ENCODE measurements at regions of chr3 and their contacts with region 1.

Region 1: DNA sequence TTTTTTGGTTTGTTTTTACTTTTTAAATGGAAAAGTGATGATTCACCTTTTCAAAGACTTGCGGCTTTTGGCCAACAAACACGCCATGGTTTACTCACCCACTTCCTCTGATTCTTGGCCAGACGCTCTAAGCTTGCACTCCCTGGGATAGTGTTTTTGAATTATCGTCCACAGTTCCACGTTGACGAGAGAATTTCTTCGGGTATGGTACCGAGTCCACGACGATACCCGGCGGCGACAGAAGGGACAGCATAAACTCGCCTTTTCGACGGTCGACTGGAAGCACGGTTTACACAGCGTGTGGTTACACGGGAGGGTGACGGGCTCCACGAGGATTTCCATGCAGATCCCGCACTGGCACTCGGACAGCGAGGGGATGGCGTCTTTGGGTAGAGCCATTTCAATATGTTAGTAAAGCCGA is 783 bp downstream of the RNF168 start:
- DNase-seq: peak; percentile 60
- H3K4me3 Mint-ChIP-seq: peak overlapping the region; percentile 99
- H3K27ac Mint-ChIP-seq: peak overlapping the region; percentile 100
- H3K4me1 Mint-ChIP-seq: peaks cover 25% of the 10 kb centered on the region
- H3K27me3 Mint-ChIP-seq: no peaks in the 10 kb centered on the region

Region 2: GRCh38 chr3:196274585-196274984 is 228.2 kb before region 1 on chr3:
- intact Hi-C with region 1: loop called (anchors 1 kb)
- DNase-seq: peak; percentile 74
- H3K4me3 Mint-ChIP-seq: peak overlapping the region; percentile 62
- H3K27ac Mint-ChIP-seq: peak overlapping the region; percentile 90
- H3K4me1 Mint-ChIP-seq: peaks cover 47% of the 10 kb centered on the region
- H3K27me3 Mint-ChIP-seq: no peaks in the 10 kb centered on the region

Region 3: GRCh38 chr3:196317687-196318467 is 184.9 kb before region 1 on chr3 and contains the start of gene DYNLT2B:
- intact Hi-C with region 1: loop called (anchors 5 kb)
- DNase-seq: peak; percentile 88
- H3K4me3 Mint-ChIP-seq: peak within 1 kb of the TSS; percentile 94
- H3K27ac Mint-ChIP-seq: peak within 1 kb of the TSS; percentile 97
- H3K4me1 Mint-ChIP-seq: peaks cover 10% of the 10 kb centered on the region
- H3K27me3 Mint-ChIP-seq: no peaks in the 10 kb centered on the region
- total RNA-seq, gene DYNLT2B: 10.9 and 12.3 TPM in 2 replicates

Region 4: DNA sequence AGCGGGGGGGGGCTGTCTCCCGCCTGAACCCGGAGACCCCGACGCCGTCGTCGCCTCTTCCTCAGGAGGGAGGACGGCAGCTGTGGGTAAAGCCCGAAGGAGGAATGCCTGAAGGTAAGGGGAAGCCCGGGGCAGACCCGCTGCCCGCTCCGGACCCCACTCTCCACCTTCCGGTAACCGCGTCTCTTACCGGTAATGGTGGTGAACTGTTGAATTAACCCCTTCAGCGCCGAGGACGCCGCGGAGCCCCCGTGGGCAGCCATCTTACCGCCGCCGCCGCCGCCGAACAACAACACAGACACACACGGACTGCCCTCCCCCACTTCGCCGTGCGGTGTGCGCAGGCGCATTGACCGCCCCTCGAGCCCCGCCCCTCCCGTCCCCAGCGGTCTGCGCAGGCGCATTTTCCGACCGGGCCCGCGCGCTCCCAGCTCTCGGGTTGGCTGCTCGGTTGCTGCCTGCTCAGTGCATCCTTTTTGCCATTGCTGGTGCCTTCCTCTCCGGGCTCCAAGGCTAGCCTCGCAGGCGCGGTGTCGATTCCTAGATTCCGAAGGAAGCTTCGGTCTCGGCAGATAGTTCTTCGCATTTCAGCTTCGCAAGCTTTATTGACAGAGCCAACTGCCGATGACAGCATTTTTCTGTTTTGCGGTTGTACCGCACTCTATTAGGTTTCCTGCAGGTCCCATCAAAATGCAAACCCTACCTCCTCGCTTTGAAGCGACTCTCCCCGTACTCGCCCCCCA is 70.5 kb before region 1 on chr3 and contains the start of gene UBXN7:
- intact Hi-C with region 1: loop called (anchors 2 kb)
- DNase-seq: peak; percentile 93
- H3K4me3 Mint-ChIP-seq: peak within 1 kb of the TSS; percentile 86
- H3K27ac Mint-ChIP-seq: peak within 1 kb of the TSS; percentile 92
- H3K4me1 Mint-ChIP-seq: peaks cover 18% of the 10 kb centered on the region
- H3K27me3 Mint-ChIP-seq: no peaks in the 10 kb centered on the region
- total RNA-seq, gene UBXN7: 64.4 and 67.8 TPM in 2 replicates

Region 5: DNA sequence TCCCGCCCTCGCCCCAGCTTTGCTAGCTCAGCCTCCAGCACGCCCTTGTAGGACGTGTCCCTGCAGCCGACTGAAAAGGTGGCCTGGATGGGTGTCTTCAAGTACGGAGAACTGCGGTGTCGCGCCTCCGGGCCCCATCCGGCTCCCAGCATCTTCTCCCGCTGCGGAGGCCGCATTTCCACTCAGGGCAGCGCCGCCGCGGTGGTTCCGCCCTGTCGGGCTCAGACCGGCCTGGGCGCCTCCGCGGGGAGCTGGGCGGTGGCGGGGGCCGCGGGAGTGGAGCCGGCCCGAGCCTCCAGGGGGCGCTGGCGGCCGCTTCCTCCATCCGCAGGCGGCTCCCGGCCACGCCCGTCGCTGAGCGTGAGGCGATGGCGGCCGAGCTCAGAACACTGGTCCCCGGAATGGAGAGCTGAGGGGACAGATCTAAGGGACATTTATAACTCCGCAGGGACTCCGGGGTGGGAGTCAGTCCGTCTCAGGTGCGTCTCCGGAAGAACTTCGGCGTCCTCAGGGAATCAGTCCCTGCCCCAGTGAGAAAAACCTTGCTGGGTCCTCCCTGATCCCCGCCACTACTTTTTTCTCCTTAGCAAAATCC is 26.0 kb after region 1 on chr3:
- intact Hi-C with region 1: loop called (anchors 1 kb)
- DNase-seq: peak; percentile 78
- H3K4me3 Mint-ChIP-seq: peak overlapping the region; percentile 72
- H3K27ac Mint-ChIP-seq: peak overlapping the region; percentile 88
- H3K4me1 Mint-ChIP-seq: peaks cover 12% of the 10 kb centered on the region
- H3K27me3 Mint-ChIP-seq: no peaks in the 10 kb centered on the region

Region 6: DNA sequence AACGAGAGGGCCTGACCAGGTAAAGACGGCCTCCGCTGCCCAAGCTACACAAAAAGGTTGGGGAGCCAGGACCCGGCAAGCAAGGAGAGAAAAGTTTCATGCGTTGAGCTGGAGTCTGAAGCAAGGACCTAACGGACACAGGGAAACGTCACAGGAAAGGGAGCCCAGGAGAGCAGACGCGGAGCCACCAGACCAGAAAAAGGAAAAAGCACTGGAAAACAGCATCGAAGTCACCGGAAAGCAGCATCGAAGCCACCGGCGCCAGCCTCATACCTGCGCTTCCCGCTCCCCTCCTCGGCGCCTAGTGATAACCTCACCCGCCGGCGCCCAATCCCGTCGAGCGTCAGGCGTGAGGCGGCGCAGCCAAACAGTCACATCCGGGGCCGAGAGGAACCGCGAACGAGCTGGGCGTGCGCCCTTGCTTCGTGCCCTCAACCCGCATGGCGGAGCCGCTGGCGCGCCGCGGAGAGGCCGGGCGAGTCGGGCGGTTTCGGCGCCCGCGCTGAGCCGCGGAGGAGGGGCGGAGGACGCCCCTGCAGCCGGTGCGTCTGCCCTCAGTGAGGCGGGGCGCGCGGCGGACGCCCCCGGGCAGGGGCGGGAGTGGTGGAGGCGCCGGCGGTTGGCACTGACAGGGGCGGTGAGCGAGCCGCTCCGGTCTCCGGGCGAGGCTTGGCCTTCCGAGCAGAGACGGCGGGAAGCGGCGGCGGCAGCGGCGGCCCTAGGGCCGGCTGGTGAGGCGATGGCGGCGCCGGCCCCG is 65.6 kb after region 1 on chr3 and contains the starts of genes FBXO45 and WDR53:
- intact Hi-C with region 1: loop called (anchors 1 kb)
- DNase-seq: peak; percentile 95
- H3K4me3 Mint-ChIP-seq: peak within 1 kb of the TSS; percentile 94
- H3K27ac Mint-ChIP-seq: peak within 1 kb of the TSS; percentile 89
- H3K4me1 Mint-ChIP-seq: peaks cover 37% of the 10 kb centered on the region
- H3K27me3 Mint-ChIP-seq: no peaks in the 10 kb centered on the region
- total RNA-seq, gene FBXO45: 22.4 and 23.0 TPM in 2 replicates
- total RNA-seq, gene WDR53: 16.5 and 17.4 TPM in 2 replicates

Region 7: DNA sequence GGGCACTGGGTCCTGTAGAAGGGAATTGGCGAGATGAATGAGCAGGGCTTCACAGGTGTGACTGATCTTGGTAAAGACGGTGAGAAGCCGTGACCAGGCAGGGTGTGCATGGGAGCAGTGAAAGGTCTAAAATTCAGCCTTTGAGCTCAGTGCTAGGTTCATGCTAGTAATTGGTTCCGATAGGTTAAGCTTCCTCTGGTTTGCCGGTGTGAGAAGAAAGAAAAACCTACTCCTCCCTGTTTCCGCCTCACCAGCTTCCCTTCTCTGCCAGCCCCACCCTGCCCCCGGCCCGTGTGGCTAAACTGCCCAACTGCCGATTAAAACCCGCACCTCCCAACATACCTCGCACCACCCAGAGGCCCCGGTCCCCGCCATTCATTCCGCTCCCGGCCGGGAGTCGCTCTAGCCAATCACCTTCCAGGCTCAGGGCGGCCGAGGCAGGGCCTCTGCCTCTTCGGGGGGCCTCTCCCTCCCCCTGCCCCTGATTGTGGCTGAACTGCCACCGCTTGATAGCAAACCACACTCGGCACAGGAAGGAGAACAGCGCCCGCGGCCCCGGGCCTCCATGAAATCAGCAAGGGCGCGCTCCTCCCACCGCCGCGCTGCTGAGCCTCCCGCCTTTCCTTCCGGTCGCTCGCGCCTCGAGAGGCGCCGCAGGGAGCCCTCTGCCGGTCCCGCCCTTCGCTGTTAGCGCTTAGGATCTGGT is 129.4 kb after region 1 on chr3:
- intact Hi-C with region 1: loop called (anchors 2 kb)
- DNase-seq: peak; percentile 97
- H3K4me3 Mint-ChIP-seq: peak overlapping the region; percentile 87
- H3K27ac Mint-ChIP-seq: peak overlapping the region; percentile 97
- H3K4me1 Mint-ChIP-seq: peaks cover 54% of the 10 kb centered on the region
- H3K27me3 Mint-ChIP-seq: no peaks in the 10 kb centered on the region